MCF 10A (cell line): ENCODE measurements at regions of chr21 and their contacts with region 1.

Region 1: GRCh38 chr21:33286600-33287456 is 20.7 kb downstream of the IL10RB start:
- DNase-seq: peak; percentile 92
- H3K4me3 Mint-ChIP-seq: peak overlapping the region; percentile 12
- H3K27ac Mint-ChIP-seq: peak overlapping the region; percentile 96
- H3K4me1 Mint-ChIP-seq: peaks cover 30% of the 10 kb centered on the region
- H3K27me3 Mint-ChIP-seq: no peaks in the 10 kb centered on the region
- CTCF ChIP-seq: no peak

Region 2: GRCh38 chr21:33238565-33239255 is 48.1 kb before region 1 on chr21:
- CTCF ChIA-PET with region 1: no interaction called
- POLR2A ChIA-PET with region 1: no interaction called
- intact Hi-C with region 1: no loop called
- DNase-seq: no peak
- H3K4me3 Mint-ChIP-seq: no peak overlapping the region
- H3K27ac Mint-ChIP-seq: no peak overlapping the region
- H3K4me1 Mint-ChIP-seq: peaks cover 6% of the 10 kb centered on the region
- H3K27me3 Mint-ChIP-seq: no peaks in the 10 kb centered on the region
- CTCF ChIP-seq: no peak

Region 3: GRCh38 chr21:33299181-33299752 is 12.4 kb after region 1 on chr21:
- CTCF ChIA-PET with region 1: interaction called, 7 read pairs
- POLR2A ChIA-PET with region 1: interaction called, 17 read pairs
- intact Hi-C with region 1: no loop called
- DNase-seq: peak; percentile 86
- H3K4me3 Mint-ChIP-seq: peak overlapping the region; percentile 44
- H3K27ac Mint-ChIP-seq: peak overlapping the region; percentile 90
- H3K4me1 Mint-ChIP-seq: peaks cover 12% of the 10 kb centered on the region
- H3K27me3 Mint-ChIP-seq: no peaks in the 10 kb centered on the region
- CTCF ChIP-seq: no peak

Region 4: GRCh38 chr21:34333150-34333739 is 1046.4 kb after region 1 on chr21:
- CTCF ChIA-PET with region 1: no interaction called
- POLR2A ChIA-PET with region 1: no interaction called
- intact Hi-C with region 1: no loop called
- DNase-seq: no peak
- H3K4me3 Mint-ChIP-seq: no peak overlapping the region
- H3K27ac Mint-ChIP-seq: no peak overlapping the region
- H3K4me1 Mint-ChIP-seq: no peaks in the 10 kb centered on the region
- H3K27me3 Mint-ChIP-seq: peaks cover 2% of the 10 kb centered on the region
- CTCF ChIP-seq: no peak